ENCODE measurements at regions of chr5 and their contacts with region 1.

Region 1: DNA sequence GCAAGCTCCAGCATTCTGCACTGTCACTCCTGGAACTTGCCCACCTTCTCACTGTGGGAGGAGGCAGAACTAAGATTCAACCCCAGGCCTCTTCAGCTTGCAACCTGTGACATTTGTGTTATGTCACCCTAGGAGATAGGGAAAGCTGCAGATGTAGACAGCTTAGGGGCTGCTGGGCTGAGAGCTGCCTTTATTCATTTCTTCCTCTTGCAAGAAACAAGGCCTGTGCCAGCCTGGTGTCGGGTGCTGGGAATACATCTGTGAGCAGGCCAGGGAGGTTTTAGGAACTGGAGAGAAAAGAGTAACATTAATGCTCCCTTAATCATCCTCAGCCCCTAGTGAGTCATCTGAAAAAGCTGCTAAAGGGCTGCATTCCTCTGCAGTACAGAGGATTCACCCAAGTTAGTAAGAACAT is 101.8 kb downstream of the FGF18 start:
- DNase-seq: peak in 1 of 2 donors; percentile 92
- H3K4me3 ChIP-seq: no peak overlapping the region
- H3K27ac ChIP-seq: peak overlapping the region; percentile 57 to 67
- H3K4me1 ChIP-seq: peaks cover 10 to 20% of the 10 kb centered on the region in 2 donors
- H3K27me3 ChIP-seq: no peaks in the 10 kb centered on the region
- CTCF ChIP-seq: peak in 1 of 3 experiments; percentile 6

Region 2: DNA sequence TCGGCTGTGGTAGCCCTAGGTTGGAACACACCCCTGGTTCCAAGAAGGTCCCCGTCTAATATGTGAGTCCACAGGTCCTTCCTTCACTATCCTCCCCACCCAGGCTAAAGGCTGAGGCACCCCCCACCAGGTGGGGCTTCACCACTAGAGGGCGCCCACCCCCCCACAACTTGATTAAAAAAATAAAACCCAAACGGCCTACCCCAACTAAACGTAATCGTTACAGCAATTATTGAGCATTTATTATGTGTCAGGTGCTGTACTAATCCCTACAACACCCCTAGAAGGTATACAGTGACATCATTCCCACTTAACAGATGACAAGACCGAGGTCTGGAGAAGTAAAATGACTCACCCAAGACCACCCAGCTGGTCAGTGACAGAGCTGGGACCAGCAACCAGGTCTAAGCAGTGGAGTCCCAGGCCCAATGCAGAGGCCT is 36.7 kb before region 1 on chr5:
- intact Hi-C with region 1: loop called (anchors 1 kb)
- DNase-seq: no peak
- H3K4me3 ChIP-seq: no peak overlapping the region
- H3K27ac ChIP-seq: peak overlapping the region in 1 of 2 donors; percentile 72
- H3K4me1 ChIP-seq: peaks cover 0 to 5% of the 10 kb centered on the region in 2 donors
- H3K27me3 ChIP-seq: no peaks in the 10 kb centered on the region
- CTCF ChIP-seq: peak; percentile 56 to 73 (median 64)

Region 3: GRCh38 chr5:171494452-171495121 is 26.6 kb before region 1 on chr5:
- intact Hi-C with region 1: loop called (anchors 2 kb)
- DNase-seq: peak; percentile 35 to 86
- H3K4me3 ChIP-seq: peak overlapping the region in 1 of 2 donors; percentile 37
- H3K27ac ChIP-seq: peak overlapping the region; percentile 85 to 88
- H3K4me1 ChIP-seq: peaks cover 7 to 30% of the 10 kb centered on the region in 2 donors
- H3K27me3 ChIP-seq: no peaks in the 10 kb centered on the region
- CTCF ChIP-seq: no peak

Region 4: GRCh38 chr5:171595801-171596231 is 74.6 kb after region 1 on chr5:
- intact Hi-C with region 1: loop called (anchors 5 kb)
- DNase-seq: peak; percentile 22 to 75
- H3K4me3 ChIP-seq: peak overlapping the region in 1 of 2 donors; percentile 7
- H3K27ac ChIP-seq: peak overlapping the region; percentile 65 to 68
- H3K4me1 ChIP-seq: peaks cover 5 to 12% of the 10 kb centered on the region in 2 donors
- H3K27me3 ChIP-seq: no peaks in the 10 kb centered on the region
- CTCF ChIP-seq: no peak

Measured in ascending aorta (tissue), 2 donors.